ENCODE measurements at regions of chr1 and their contacts with region 1.

Region 1: DNA sequence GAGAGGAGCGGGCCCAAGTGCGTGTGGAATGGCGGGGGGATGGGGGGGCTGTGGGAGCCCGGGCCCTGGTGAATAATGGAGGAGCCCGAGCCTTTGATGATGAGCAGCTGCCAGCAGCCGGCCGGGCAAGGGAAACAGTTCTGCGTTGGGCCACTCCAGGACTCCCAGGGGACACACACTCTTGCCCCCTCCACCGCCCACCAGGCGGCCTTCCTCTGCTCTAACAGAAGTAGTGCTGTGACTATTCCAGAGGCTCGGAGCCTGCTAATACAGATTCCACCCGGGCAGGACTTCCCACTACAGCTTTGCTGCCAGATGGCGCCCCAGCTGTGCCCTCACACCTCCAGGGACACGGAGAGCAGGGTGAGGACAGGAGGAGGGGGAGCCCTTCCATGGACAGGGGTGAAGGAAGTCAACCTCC is 48.2 kb upstream of the LRP8 start:
- DNase-seq: no peak
- H3K4me3 ChIP-seq: no peak overlapping the region
- H3K4me3 Mint-ChIP-seq: no peak overlapping the region
- H3K27ac Mint-ChIP-seq: no peak overlapping the region
- H3K4me1 ChIP-seq: peaks cover 9% of the 10 kb centered on the region; the same call in 1 of the 2 replicates
- H3K4me1 Mint-ChIP-seq: peaks cover 13% of the 10 kb centered on the region
- H3K27me3 ChIP-seq: no peaks in the 10 kb centered on the region
- H3K27me3 Mint-ChIP-seq: no peaks in the 10 kb centered on the region
- CTCF ChIP-seq: no peak

Region 2: GRCh38 chr1:52947490-52947889 is 428.6 kb before region 1 on chr1:
- CTCF ChIA-PET with region 1: no interaction called
- POLR2A ChIA-PET with region 1: no interaction called
- intact Hi-C with region 1: no loop called
- DNase-seq: no peak
- H3K4me3 ChIP-seq: no peak overlapping the region
- H3K4me3 Mint-ChIP-seq: no peak overlapping the region
- H3K27ac Mint-ChIP-seq: no peak overlapping the region
- H3K4me1 ChIP-seq: peaks cover 8% of the 10 kb centered on the region
- H3K4me1 Mint-ChIP-seq: peaks cover 8% of the 10 kb centered on the region
- H3K27me3 ChIP-seq: no peaks in the 10 kb centered on the region
- H3K27me3 Mint-ChIP-seq: no peaks in the 10 kb centered on the region
- CTCF ChIP-seq: no peak

Region 3: GRCh38 chr1:53344891-53345838 is 30.9 kb before region 1 on chr1:
- CTCF ChIA-PET with region 1: no interaction called
- POLR2A ChIA-PET with region 1: no interaction called
- intact Hi-C with region 1: loop called (anchors 5 kb)
- DNase-seq: no peak
- H3K4me3 ChIP-seq: no peak overlapping the region
- H3K4me3 Mint-ChIP-seq: no peak overlapping the region
- H3K27ac Mint-ChIP-seq: peak overlapping the region; percentile 84
- H3K4me1 ChIP-seq: peaks cover 17% of the 10 kb centered on the region
- H3K4me1 Mint-ChIP-seq: peaks cover 22% of the 10 kb centered on the region
- H3K27me3 ChIP-seq: no peaks in the 10 kb centered on the region
- H3K27me3 Mint-ChIP-seq: no peaks in the 10 kb centered on the region
- CTCF ChIP-seq: no peak